ENCODE measurements at regions of chr14 and their contacts with region 1.

Region 1: GRCh38 chr14:103333754-103334643 is at the start of gene EIF5:
- DNase-seq: peak; percentile 97

Region 2: DNA sequence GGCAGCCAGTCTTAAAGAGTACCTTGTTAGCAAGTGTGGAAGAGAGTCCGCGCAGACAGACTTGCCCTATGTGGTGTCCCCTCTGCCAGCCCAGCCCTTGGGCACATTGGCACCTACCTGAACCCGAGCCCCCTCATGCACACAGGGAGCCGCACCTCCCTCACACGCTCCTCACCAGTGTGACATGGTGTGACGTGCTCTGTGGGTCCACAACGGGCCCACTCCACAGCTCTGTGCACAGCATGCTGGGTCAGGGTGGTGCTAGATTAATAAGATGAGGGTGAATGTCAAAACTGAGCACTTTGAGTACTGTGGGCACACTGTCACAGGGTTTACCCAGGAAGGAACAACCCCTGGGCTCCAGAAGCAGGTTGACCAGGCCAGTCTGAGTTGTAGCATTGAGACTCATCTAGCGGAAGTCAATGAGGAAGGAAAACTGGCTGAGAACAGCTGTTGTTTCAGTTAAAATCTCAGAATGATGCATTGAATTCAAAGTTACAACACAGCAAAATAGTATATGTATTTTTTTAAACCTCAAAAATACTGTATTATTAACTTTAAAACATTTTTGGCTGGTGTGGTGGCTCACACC is 464.9 kb before region 1 on chr14:
- CTCF ChIA-PET with region 1: no interaction called
- POLR2A ChIA-PET with region 1: no interaction called
- DNase-seq: no peak

Region 3: GRCh38 chr14:103188810-103189503 is 145.0 kb before region 1 on chr14:
- CTCF ChIA-PET with region 1: no interaction called
- POLR2A ChIA-PET with region 1: no interaction called
- DNase-seq: no peak

Region 4: GRCh38 chr14:103220134-103220981 is 113.6 kb before region 1 on chr14:
- CTCF ChIA-PET with region 1: no interaction called
- POLR2A ChIA-PET with region 1: no interaction called
- DNase-seq: no peak

Region 5: GRCh38 chr14:103311171-103311997 is 22.6 kb before region 1 on chr14:
- CTCF ChIA-PET with region 1: no interaction called
- POLR2A ChIA-PET with region 1: interaction called, 14 read pairs
- DNase-seq: no peak

Region 6: GRCh38 chr14:103346286-103346685 is 12.3 kb after region 1 on chr14:
- CTCF ChIA-PET with region 1: no interaction called
- POLR2A ChIA-PET with region 1: interaction called, 76 read pairs
- DNase-seq: no peak

Region 7: DNA sequence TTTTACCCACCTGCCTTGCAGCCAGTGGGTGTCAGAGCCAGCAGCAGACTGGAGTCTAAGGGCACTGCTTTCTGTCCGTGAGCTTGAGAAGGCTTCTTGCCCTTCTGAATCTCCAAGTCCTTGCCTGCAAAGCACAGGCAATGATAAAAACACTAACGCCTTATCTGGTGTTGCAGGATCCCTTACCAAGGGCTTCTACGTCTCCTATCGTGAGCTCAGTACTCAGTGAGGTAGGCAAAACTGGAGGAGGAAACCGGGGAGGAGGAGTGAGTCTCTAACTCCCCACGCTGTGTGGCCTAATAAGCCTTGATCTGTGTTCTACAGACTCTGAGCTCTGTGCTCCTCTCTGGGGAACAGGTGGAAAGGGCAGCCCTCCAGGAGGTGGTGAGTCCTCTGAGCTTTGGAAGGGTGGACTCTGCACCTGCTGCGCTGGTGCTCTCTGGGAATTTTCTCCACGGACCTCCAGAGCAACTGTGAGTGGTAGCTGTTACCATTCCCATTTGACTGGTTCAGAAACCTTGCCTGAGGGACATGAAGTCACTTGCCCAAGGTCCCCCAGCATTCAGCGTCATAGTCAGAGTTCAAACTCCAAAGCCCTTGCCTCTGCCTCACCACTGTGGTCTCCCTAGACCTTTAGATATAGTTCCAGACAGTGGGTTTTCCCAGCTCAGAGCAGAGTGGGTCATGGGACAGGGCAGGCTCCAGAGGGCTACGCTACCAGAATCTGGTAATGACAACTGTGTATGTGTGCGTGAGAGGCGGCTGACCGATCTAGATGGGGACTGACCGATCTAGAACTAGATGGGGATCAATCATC is 44.2 kb after region 1 on chr14:
- CTCF ChIA-PET with region 1: no interaction called
- POLR2A ChIA-PET with region 1: interaction called, 17 read pairs
- DNase-seq: no peak

Region 8: DNA sequence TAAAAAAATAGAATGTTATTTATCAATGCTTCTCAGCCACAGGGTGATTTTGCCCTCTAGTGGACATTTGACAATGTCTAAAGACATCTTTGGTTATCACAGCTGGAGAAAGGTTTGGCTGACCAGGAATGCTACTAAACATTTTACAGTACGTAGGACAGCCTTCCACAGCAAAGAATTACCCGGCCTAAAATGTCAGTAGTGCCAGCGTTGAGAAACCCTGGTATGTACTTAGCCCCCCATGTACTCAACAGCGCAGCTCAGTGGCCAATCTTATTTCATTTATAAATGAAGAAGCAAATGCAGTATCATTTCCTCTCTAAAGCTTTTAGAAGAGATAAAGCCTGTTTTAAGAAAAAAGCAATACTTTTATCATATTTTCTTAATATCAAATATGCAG is 57.0 kb after region 1 on chr14:
- CTCF ChIA-PET with region 1: interaction called, 7 read pairs
- POLR2A ChIA-PET with region 1: interaction called, 19 read pairs
- DNase-seq: no peak

Region 9: GRCh38 chr14:103418481-103418818 is 84.5 kb after region 1 on chr14:
- CTCF ChIA-PET with region 1: no interaction called
- POLR2A ChIA-PET with region 1: interaction called, 10 read pairs
- DNase-seq: no peak

Measured in HEK293T (cell line).